H1 (cell line): ENCODE measurements at regions of chr2 and their contacts with region 1.

Region 1: GRCh38 chr2:218852911-218853667 is 6.5 kb upstream of the WNT6 start:
- DNase-seq: peak; percentile 62 to 91
- H3K4me3 ChIP-seq: peak overlapping the region in 1 of 4 experiments; percentile 17; a peak in 1 of 8 replicates
- H3K27ac ChIP-seq: no peak overlapping the region
- H3K4me1 ChIP-seq: peaks cover 13 to 30% (median 17%) of the 10 kb centered on the region in 4 experiments
- H3K27me3 ChIP-seq: peaks cover 49 to 58% (median 52%) of the 10 kb centered on the region in 4 experiments
- CTCF ChIP-seq: peak; percentile 74 to 93 (median 84)
- EP300 ChIP-seq: no peak
- POLR2A ChIP-seq: no peak
- RAD21 ChIP-seq: peak; percentile 93 to 94

Region 2: DNA sequence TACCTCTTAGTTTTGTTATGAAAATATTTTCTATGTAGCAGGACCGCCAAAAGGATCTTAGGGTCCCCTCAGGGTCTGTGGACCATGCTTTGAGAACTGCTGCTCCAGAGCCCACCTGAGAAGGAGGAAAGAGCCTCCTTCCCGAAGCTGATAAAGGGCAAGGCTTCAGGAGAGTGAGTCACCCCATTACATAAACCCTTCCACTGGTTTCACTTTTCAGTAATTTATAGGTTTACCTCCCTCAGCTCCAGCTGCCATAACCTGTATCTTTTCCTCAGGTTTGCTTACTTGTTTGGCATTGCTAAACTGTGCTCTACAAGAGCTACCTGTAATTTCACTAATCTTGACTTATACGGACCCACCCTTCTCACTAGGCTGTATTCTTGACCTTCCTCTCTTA is 135.8 kb before region 1 on chr2:
- CTCF ChIA-PET with region 1: interaction called, 25 read pairs
- POLR2A ChIA-PET with region 1: no interaction called
- DNase-seq: no peak
- H3K4me3 ChIP-seq: no peak overlapping the region
- H3K27ac ChIP-seq: no peak overlapping the region
- H3K4me1 ChIP-seq: peaks cover 0 to 11% (median 3%) of the 10 kb centered on the region in 4 experiments; a peak in 5 of 7 replicates
- H3K27me3 ChIP-seq: no peaks in the 10 kb centered on the region
- CTCF ChIP-seq: no peak
- EP300 ChIP-seq: no peak
- POLR2A ChIP-seq: no peak
- RAD21 ChIP-seq: no peak

Region 3: DNA sequence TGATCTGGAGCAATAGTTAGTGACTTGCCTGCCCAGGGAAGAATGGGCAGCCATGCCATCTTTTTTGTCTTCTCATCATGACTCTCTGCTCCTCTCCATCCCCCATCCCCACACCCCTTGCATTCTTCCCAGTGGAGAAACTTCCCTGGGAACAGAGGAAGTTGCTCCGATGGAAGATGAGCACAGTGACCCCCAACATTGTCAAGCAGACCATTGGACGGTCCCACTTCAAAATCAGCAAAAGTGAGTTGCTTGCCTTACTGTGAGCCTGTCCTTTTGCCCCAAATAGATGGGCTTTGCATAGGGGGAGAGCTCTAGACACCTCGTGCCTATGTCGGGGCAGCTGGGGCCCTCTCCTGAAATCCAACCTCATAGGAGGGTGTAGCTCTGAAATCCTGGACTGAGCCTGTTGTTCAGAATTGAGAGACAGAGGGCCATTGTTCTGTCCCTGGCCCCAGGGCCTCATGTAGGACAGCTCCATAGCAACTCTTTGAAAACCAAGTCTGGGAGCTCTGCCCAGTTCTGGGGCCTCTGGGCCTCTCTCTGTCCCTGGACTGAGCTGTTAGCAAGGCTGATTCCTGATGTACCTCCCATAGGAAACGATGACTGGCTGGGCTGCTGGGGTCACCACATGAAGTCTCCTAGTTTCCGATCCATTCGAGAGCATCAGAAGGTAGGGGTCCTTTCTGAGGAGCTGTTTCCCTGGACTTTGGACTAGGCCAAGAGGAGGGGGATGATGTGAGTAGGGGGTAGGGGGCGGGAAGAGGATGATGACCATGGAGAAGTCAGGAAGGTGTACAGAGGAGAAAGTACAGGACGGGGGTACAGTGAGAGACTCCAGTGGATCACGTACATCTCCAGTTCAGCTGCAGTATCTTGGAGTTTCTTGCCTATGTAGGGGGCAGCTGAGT is 107.3 kb before region 1 on chr2:
- CTCF ChIA-PET with region 1: interaction called, 39 read pairs
- POLR2A ChIA-PET with region 1: no interaction called
- DNase-seq: no peak
- H3K4me3 ChIP-seq: no peak overlapping the region
- H3K27ac ChIP-seq: no peak overlapping the region
- H3K4me1 ChIP-seq: no peaks in the 10 kb centered on the region
- H3K27me3 ChIP-seq: no peaks in the 10 kb centered on the region
- CTCF ChIP-seq: no peak
- EP300 ChIP-seq: no peak
- POLR2A ChIP-seq: no peak
- RAD21 ChIP-seq: no peak

Region 4: DNA sequence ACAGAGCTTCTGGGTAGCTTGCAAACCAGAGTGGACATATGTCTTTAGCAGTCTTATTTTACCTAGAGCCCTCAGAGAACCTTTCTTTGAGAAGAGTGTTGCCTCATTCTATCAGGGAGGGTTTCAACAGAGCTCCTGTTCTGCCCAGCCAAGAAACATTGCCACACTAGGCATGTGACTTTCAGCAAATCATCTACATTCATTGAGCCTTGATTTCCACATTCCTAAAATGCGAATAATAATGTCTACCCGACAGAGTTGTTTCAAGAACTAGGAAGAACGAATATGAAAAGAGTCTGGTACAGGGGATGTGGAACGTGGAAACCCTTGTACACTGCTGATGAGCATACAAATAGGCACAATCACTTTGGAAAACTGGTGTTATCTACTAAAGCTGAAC is 13.7 kb before region 1 on chr2:
- CTCF ChIA-PET with region 1: interaction called, 15 read pairs
- POLR2A ChIA-PET with region 1: no interaction called
- DNase-seq: no peak
- H3K4me3 ChIP-seq: no peak overlapping the region
- H3K27ac ChIP-seq: no peak overlapping the region
- H3K4me1 ChIP-seq: peaks cover 0 to 3% (median 0%) of the 10 kb centered on the region in 4 experiments; a peak in 1 of 7 replicates
- H3K27me3 ChIP-seq: no peaks in the 10 kb centered on the region; a peak in 1 of 7 replicates
- CTCF ChIP-seq: no peak
- EP300 ChIP-seq: no peak
- POLR2A ChIP-seq: no peak
- RAD21 ChIP-seq: no peak

Region 5: GRCh38 chr2:218885981-218886947 is 33.2 kb after region 1 on chr2:
- CTCF ChIA-PET with region 1: interaction called, 20 read pairs
- POLR2A ChIA-PET with region 1: no interaction called
- DNase-seq: no peak
- H3K4me3 ChIP-seq: no peak overlapping the region
- H3K27ac ChIP-seq: no peak overlapping the region
- H3K4me1 ChIP-seq: peaks cover 0 to 4% (median 2%) of the 10 kb centered on the region in 4 experiments; a peak in 4 of 7 replicates
- H3K27me3 ChIP-seq: peaks cover 76 to 93% (median 90%) of the 10 kb centered on the region in 4 experiments
- CTCF ChIP-seq: no peak
- EP300 ChIP-seq: no peak
- POLR2A ChIP-seq: no peak
- RAD21 ChIP-seq: no peak

Region 6: GRCh38 chr2:218944759-218945404 is 91.8 kb after region 1 on chr2:
- CTCF ChIA-PET with region 1: no interaction called
- POLR2A ChIA-PET with region 1: no interaction called
- DNase-seq: no peak
- H3K4me3 ChIP-seq: no peak overlapping the region
- H3K27ac ChIP-seq: no peak overlapping the region
- H3K4me1 ChIP-seq: no peaks in the 10 kb centered on the region
- H3K27me3 ChIP-seq: no peaks in the 10 kb centered on the region; a peak in 2 of 7 replicates
- CTCF ChIP-seq: no peak
- EP300 ChIP-seq: no peak
- POLR2A ChIP-seq: no peak
- RAD21 ChIP-seq: no peak